ENCODE measurements at regions of chr11 and their contacts with region 1.

Region 1: DNA sequence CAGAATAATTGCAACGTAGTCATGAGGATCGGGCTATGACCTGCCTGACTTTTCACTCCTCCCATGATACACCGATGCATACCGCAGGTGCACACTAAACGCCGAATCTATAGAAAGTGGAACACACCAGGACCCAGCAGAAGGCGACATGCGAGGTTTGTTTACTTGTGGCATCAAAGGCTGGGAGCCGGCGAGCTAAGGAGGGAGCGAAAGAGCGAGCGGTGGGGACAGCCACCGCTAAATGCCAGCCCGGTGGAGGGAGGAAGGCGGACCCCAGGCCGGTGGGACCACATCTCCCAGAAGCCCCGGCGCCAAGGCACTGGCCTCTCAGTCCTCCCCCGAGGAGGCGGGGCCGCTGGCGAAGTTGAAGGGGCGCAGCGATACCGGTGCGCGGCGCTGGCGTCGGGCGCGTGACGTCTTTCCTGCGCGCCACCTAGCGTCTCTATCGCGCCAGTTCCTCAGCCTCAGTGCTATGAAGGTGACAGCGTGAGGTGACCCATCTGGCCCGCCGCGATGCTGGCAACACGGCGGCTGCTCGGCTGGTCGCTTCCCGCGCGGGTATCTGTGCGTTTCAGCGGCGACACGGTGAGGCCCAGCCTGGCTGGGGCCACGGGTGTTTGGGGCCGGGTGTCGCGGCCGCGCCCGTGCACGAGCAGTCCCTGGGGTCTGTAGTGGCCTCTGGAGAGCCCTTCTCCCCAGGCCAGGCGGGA is at the start of gene NDUFV1:
- DNase-seq: peak; percentile 94 to 98
- ATAC-seq: peak; percentile 98 to 99 (median 99)
- H3K4me3 ChIP-seq: peak within 1 kb of the TSS; percentile 55
- H3K4me3 Mint-ChIP-seq: peak within 1 kb of the TSS; percentile 91
- H3K27ac ChIP-seq: peak within 1 kb of the TSS; percentile 51
- H3K27ac Mint-ChIP-seq: peak within 1 kb of the TSS; percentile 78 to 91
- H3K4me1 ChIP-seq: peaks cover 23% of the 10 kb centered on the region
- H3K4me1 Mint-ChIP-seq: peaks cover 10 to 16% of the 10 kb centered on the region in 2 donors
- H3K27me3 ChIP-seq: no peaks in the 10 kb centered on the region
- H3K27me3 Mint-ChIP-seq: no peaks in the 10 kb centered on the region
- CTCF ChIP-seq: peak; percentile 74
- total RNA-seq, gene NDUFV1: 346 to 393 (median 360) TPM

Region 2: DNA sequence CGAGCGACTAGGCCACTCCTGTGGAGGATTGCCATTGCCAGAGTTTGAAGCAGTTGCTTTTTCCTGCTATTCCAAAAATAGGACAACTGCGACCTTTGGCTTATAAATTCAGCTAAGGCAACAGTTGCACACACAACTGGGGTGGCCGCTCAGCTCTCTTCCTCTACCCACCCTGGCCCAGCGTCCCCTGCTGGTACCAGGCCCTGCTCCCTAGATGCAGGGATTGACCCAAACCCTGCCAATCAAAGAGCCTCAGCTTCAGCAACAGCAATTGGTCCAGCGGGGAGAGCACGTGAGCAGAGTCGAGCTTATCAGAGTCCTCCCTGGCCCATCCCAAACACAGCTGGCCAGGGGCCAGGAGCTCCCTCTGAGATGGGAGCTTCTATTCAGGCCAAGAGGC is 61.4 kb before region 1 on chr11:
- intact Hi-C with region 1: no loop called
- DNase-seq: no peak
- ATAC-seq: no peak
- H3K4me3 ChIP-seq: no peak overlapping the region
- H3K4me3 Mint-ChIP-seq: no peak overlapping the region
- H3K27ac ChIP-seq: no peak overlapping the region
- H3K27ac Mint-ChIP-seq: no peak overlapping the region
- H3K4me1 ChIP-seq: no peaks in the 10 kb centered on the region
- H3K4me1 Mint-ChIP-seq: no peaks in the 10 kb centered on the region
- H3K27me3 ChIP-seq: no peaks in the 10 kb centered on the region
- H3K27me3 Mint-ChIP-seq: peaks cover 0 to 6% of the 10 kb centered on the region in 2 donors
- CTCF ChIP-seq: no peak

Region 3: GRCh38 chr11:67572747-67573419 is 33.8 kb before region 1 on chr11:
- intact Hi-C with region 1: loop called (anchors 5 kb)
- DNase-seq: peak; percentile 31 to 60
- ATAC-seq: peak in 2 of 3 donors; percentile 34 to 44
- H3K4me3 ChIP-seq: no peak overlapping the region
- H3K4me3 Mint-ChIP-seq: no peak overlapping the region
- H3K27ac ChIP-seq: no peak overlapping the region
- H3K27ac Mint-ChIP-seq: no peak overlapping the region
- H3K4me1 ChIP-seq: no peaks in the 10 kb centered on the region
- H3K4me1 Mint-ChIP-seq: peaks cover 0 to 5% of the 10 kb centered on the region in 2 donors
- H3K27me3 ChIP-seq: no peaks in the 10 kb centered on the region
- H3K27me3 Mint-ChIP-seq: peaks cover 0 to 6% of the 10 kb centered on the region in 2 donors
- CTCF ChIP-seq: peak; percentile 65

Region 4: DNA sequence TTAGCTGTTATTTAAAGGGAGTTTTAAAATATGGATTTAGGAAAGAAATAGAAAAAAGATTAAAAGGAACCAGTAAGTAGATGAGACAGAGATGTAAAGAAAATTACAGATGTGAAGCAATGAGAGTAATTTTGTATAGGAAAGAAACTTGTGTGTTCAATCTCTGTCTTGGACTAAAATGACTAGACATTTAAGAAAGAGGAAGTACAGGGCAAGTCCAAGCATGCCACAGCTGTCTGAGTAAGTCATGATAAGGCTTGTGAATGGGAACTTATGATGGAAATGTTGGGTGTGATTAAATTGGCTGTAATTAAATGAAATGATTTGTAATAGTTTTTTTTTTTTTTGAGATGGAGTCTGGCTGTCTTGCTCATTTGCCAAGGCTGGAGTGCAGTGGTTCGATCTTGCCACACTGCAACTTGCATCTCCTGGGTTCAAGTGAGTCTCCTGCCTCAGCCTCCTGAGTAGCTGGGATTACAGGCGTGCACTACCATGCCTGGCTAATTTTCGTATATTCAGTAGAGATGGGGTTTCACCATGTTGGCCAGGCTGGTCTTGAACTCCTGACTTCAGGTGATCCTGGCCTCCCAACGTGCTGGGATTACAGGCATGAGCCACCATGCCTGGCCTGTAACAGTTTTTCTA is 49.8 kb after region 1 on chr11:
- intact Hi-C with region 1: no loop called
- DNase-seq: no peak
- ATAC-seq: no peak
- H3K4me3 ChIP-seq: no peak overlapping the region
- H3K4me3 Mint-ChIP-seq: no peak overlapping the region
- H3K27ac ChIP-seq: no peak overlapping the region
- H3K27ac Mint-ChIP-seq: no peak overlapping the region
- H3K4me1 ChIP-seq: peaks cover 3% of the 10 kb centered on the region
- H3K4me1 Mint-ChIP-seq: no peaks in the 10 kb centered on the region
- H3K27me3 ChIP-seq: no peaks in the 10 kb centered on the region
- H3K27me3 Mint-ChIP-seq: peaks cover 0 to 5% of the 10 kb centered on the region in 2 donors
- CTCF ChIP-seq: no peak